ENCODE measurements at regions of chr13 and their contacts with region 1.

Region 1: DNA sequence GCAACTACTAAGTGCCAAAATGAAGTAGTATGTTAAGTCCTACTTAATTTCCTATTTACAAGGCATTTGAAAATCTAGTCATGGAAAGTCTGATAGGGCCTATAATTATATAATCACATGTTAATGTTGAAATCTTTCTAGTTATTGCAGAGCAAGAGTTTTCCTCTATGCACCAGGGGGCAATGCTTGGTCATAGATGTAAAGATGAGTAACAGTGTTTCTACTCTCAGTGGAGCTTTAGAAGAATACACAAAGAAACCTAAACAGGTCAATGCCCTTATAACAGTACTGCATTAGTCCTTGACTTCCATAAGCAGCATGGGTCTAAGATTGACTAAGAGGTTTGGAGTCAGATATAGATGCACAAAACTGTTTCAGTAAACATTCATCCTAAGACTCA is 218.7 kb downstream of the KCTD12 start:
- DNase-seq: no peak
- H3K4me3 ChIP-seq: no peak overlapping the region
- H3K27ac ChIP-seq: no peak overlapping the region
- H3K4me1 ChIP-seq: peaks cover 0 to 10% (median 3%) of the 10 kb centered on the region in 6 donors
- H3K27me3 ChIP-seq: no peaks in the 10 kb centered on the region
- CTCF ChIP-seq: peak in 7 of 11 experiments; percentile 9 to 47 (median 40)
- POLR2A ChIP-seq: no peak

Region 2: DNA sequence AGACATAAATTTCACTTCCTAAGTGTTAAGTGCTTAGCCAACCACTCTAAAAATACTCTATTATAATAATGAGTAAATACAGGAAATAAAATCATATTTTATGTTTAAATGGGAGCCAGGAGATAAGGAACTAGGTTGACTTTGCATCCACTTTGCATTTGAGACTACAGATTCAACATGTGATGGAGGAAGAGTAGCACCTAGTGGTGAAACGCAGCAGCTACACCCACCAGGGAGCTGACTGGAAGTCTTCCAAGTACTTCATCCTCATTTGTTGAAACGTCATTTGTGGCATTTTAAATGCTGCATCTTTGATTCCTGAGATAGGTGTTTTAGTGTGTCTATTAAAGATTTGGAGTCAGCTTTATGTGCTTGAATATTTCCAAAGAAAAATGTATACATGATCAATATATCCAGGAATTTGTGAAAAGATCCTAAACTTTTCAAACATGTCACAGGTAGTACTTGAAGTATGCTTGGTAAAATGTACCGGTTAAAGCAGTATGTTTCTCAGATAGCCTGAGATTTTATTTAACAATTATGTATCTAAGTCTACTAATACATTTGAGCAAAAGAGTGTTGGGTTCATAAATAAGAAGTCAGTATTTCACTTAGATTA is 236.1 kb after region 1 on chr13:
- intact Hi-C with region 1: loop called (anchors 10 kb)
- DNase-seq: peak; percentile 83
- H3K4me3 ChIP-seq: no peak overlapping the region
- H3K27ac ChIP-seq: no peak overlapping the region
- H3K4me1 ChIP-seq: peaks cover 0 to 8% (median 2%) of the 10 kb centered on the region in 6 donors
- H3K27me3 ChIP-seq: peaks cover 0 to 9% (median 0%) of the 10 kb centered on the region in 7 donors
- CTCF ChIP-seq: peak; percentile 91 to 98 (median 95)
- POLR2A ChIP-seq: no peak